CD8-positive, alpha-beta T cell (primary cell): ENCODE measurements at regions of chr7 and their contacts with region 1.

Region 1: GRCh38 chr7:83996879-83997278 is 197.7 kb downstream of the SEMA3A start:
- DNase-seq: no peak
- ATAC-seq: no peak
- H3K4me3 ChIP-seq: no peak overlapping the region
- H3K4me3 Mint-ChIP-seq: no peak overlapping the region
- H3K27ac ChIP-seq: no peak overlapping the region
- H3K27ac Mint-ChIP-seq: no peak overlapping the region
- H3K4me1 ChIP-seq: no peaks in the 10 kb centered on the region
- H3K4me1 Mint-ChIP-seq: peaks cover 3% of the 10 kb centered on the region
- H3K27me3 ChIP-seq: no peaks in the 10 kb centered on the region
- H3K27me3 Mint-ChIP-seq: no peaks in the 10 kb centered on the region
- CTCF ChIP-seq: no peak

Region 2: DNA sequence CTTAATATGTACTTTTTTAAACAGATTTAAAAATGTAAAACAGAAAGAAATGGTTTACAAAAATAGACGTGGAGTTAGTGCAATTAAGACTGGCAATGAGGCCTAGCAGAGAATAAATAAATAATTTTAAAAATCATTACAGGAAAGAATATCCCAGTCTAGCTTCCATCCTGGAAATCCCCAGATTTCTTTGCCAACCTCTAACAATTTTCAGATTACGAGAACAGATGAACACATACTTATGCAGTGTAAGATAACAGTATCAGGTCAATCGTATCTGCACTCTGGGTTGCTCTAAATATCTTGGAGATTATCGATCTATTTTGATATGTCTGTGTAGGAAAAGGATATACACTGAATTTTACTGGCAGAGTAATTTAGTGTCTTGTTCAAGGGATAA is 12.8 kb before region 1 on chr7:
- CTCF ChIA-PET with region 1: no interaction called
- POLR2A ChIA-PET with region 1: no interaction called
- intact Hi-C with region 1: loop called in 1 of 2 experiments (anchors 1 kb)
- DNase-seq: no peak
- ATAC-seq: no peak
- H3K4me3 ChIP-seq: no peak overlapping the region
- H3K4me3 Mint-ChIP-seq: no peak overlapping the region
- H3K27ac ChIP-seq: no peak overlapping the region
- H3K27ac Mint-ChIP-seq: no peak overlapping the region
- H3K4me1 ChIP-seq: no peaks in the 10 kb centered on the region
- H3K4me1 Mint-ChIP-seq: no peaks in the 10 kb centered on the region
- H3K27me3 ChIP-seq: no peaks in the 10 kb centered on the region
- H3K27me3 Mint-ChIP-seq: no peaks in the 10 kb centered on the region
- CTCF ChIP-seq: no peak

Region 3: DNA sequence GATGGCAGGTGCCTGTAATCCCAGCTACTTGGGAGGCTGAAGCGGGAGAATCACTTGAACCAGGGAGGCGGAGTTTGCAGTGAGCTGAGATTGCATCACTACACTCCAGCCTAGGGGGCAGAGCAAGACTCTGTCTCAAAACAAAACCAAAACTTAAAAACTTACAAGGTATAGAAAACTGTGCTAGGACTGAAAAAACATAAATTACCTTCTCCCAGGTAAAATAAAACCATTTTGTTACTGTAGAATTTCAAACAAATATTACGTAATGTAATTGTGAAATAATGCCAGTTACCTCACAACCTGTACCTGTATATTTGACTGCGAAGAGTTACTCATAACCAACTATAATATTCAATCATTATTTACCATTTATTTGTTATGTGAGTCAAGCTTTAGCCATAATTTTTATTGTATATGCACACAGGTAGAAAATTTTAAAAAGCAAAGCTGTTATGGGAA is 16.9 kb after region 1 on chr7:
- CTCF ChIA-PET with region 1: no interaction called
- POLR2A ChIA-PET with region 1: no interaction called
- intact Hi-C with region 1: no loop called
- DNase-seq: no peak
- ATAC-seq: no peak
- H3K4me3 ChIP-seq: no peak overlapping the region
- H3K4me3 Mint-ChIP-seq: no peak overlapping the region
- H3K27ac ChIP-seq: no peak overlapping the region
- H3K27ac Mint-ChIP-seq: no peak overlapping the region
- H3K4me1 ChIP-seq: no peaks in the 10 kb centered on the region
- H3K4me1 Mint-ChIP-seq: no peaks in the 10 kb centered on the region
- H3K27me3 ChIP-seq: no peaks in the 10 kb centered on the region
- H3K27me3 Mint-ChIP-seq: no peaks in the 10 kb centered on the region
- CTCF ChIP-seq: no peak